BJ (cell line): ENCODE measurements at regions of chr5 and their contacts with region 1.

Region 1: DNA sequence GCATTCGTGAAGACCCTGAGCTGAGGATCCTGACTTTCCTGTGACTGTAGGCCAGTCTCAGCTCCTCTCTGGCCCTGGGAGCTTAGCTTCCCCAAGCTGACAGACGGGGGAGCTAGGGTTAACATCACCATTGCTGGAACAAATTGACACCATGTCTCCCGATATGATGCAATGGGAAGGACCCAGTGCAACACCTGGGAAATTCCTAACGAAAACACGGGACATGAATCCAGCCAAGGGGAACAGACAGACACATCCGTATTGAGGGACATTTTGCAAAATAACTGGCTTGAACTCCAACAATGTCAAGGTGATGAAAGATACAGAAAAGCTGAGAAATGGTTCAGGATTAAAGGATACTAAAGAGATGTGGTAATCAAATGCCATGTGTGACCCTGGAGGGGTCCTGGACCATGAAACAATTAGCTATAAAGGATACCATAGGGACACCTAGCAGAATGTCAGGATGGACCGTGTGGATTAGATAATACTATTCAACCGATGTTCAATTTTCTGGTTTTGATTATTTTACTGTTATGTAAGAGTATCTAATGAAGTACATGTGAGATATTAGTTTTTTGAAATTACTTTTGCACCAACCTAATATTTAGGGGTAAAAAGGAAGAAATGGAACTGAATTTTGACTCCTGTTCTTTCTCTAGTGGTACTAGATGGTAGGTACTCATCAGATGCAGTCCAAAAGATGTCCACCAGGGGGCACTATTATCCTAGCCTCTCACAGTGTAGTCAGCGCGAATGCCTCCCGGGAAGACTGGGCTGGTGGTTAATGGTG is 52.7 kb downstream of the NDST1 start:
- DNase-seq: no peak
- H3K4me3 ChIP-seq: no peak overlapping the region
- H3K27me3 ChIP-seq: no peaks in the 10 kb centered on the region
- CTCF ChIP-seq: peak; percentile 79

Region 2: DNA sequence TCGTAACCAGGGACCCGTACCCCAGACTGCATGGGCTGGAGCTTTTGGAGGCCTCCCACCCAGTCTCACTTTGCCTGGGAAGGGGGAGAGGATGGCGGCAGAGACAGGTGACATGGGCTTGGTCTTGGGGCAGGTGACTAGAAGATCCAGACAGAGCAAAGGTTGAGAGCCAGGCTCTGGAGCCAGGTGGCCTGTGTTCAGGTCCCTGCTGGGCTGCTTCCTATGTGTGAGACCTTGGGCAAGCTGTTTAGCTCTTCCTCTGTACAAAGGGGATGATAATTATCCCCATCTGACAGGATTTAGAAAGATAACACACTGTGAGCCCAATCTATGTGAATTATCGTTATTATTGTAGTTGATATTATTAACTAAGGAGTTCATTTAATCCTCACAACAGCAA is 68.7 kb before region 1 on chr5:
- CTCF ChIA-PET with region 1: interaction called, 8 read pairs
- POLR2A ChIA-PET with region 1: interaction called, 25 read pairs
- DNase-seq: no peak
- H3K4me3 ChIP-seq: no peak overlapping the region
- H3K27me3 ChIP-seq: no peaks in the 10 kb centered on the region
- CTCF ChIP-seq: no peak

Region 3: GRCh38 chr5:150550286-150550685 is 10.3 kb before region 1 on chr5:
- CTCF ChIA-PET with region 1: interaction called, 11 read pairs
- POLR2A ChIA-PET with region 1: no interaction called
- DNase-seq: no peak
- H3K4me3 ChIP-seq: no peak overlapping the region
- H3K27me3 ChIP-seq: no peaks in the 10 kb centered on the region
- CTCF ChIP-seq: no peak

Region 4: DNA sequence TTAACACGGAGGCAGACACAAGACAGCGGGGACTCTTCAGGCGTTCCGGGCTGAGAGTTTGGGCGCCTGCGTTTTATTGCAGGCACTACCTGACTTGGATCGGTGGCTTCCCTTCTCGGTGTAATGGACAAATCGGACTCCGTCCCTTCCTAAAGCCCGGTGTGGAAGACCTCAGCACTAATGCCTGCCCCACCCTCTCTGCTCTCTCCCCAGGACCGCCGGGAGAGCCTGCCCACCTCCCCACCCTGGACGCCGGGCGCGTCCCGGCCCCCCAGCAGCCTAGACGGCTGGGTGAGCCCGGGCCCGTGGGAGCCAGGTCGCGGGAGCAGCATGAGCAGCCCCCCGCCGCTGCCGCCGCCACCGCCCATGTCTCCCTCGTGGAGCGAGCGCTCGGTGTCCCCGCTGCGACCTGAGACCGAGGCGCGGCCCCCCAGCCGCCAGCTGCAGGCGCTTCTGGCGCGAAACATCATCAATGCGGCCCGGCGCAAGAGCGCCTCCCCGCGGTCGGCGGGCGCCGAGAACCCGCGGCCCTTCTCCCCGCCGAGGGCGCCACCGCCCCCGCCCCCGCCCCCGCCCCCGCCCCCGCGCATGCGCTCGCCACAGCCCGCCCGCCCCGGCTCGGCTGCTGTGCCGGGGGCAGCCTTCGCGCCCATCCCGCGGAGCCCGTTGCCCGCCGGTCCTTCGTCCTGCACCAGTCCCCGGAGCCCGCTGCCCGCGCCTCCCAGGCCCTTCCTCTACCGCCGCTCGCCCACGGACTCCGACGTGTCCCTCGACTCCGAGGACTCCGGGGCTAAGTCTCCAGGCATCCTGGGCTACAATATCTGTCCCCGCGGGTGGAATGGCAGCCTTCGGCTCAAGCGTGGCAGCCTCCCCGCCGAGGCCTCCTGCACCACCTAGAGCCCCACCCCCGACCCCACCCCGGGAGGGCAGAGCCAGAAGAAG is 95.9 kb after region 1 on chr5:
- CTCF ChIA-PET with region 1: interaction called, 78 read pairs
- POLR2A ChIA-PET with region 1: no interaction called
- DNase-seq: no peak
- H3K4me3 ChIP-seq: peak overlapping the region; percentile 46
- H3K27me3 ChIP-seq: peaks cover 3% of the 10 kb centered on the region
- CTCF ChIP-seq: peak; percentile 50

Region 5: DNA sequence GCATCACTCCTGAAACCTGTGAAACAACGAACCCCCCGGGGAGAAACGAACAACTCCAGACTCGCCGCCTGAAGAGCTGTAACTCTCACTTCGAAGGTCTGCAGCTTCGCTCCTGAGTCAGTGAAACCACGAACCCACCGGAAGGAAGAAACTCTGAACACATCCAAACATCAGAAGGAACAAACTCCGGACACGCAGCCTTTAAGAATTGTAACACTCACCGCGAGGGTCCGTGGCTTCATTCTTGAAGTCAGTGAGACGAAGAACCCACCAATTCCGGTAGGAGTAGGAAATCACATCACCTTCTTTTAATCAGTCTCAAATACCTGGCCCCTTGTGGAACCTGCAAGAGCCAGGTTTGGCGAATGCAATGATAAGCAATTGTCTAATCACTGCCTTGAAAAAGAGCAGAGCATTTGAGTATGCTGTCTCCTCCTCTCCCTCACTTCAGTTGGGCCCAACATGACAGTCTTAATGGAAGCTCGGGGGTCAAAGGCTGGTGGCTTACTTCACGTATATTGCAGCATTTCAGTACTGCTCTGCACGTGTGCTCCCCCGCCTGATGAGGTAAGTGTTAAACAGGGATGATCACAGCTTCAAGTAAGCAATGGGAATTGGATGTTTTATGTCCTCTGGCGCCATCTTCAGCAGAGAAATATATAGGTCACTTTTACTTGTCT is 286.2 kb after region 1 on chr5:
- CTCF ChIA-PET with region 1: interaction called, 41 read pairs
- POLR2A ChIA-PET with region 1: no interaction called
- DNase-seq: peak; percentile 50
- H3K4me3 ChIP-seq: no peak overlapping the region
- H3K27me3 ChIP-seq: peaks cover 2% of the 10 kb centered on the region
- CTCF ChIP-seq: peak; percentile 63